ENCODE measurements at regions of chr17 and their contacts with region 1.

Region 1: DNA sequence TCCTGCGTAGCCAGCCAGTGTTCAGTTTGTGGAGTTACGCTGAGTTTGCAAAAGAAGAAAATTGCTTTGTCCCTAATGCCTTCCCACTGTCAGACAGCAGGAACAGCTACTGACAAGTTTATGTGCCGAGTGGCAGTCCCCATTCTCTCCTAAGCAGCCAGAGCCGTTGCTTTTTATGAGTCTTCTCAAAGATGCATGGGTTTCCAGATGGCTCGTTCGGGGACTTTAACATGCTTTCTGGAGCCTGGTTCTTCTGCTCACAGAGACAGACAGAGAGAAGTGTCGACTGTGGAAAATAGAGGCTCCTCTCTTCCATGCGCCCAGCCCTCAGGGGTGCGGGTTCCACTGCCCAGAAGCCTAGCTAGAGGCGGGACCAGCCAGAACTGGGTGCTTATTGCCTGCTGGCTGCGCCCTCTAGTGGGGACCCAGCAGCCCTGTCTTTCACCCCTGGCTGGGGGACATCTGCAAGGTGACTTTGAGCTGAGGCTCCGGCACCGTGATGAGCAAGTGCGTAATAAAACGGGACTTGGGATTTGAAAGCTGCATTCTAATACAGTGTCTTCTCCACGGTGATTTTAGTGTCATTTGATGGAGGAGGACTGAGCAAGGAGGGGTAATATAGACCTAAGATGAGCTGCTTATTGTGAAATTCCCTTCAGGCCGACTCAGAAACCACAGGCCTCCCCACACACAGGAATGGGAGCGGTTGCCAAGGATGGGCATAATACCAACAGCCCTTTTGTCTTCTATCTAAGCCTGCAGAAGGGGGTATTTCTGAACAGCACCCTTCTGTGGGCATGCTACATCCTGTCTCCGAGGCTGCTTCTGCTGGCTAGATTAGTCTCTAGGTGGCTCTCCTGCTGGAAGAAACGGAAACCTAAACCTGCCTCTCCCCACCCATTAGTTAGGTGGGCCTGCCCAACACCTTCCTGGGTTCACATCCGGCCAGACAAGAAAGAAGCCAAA is 73.1 kb downstream of the CCDC182 start:
- DNase-seq: peak; percentile 69
- ATAC-seq: peak; percentile 97
- H3K4me3 ChIP-seq: no peak overlapping the region
- H3K27ac ChIP-seq: no peak overlapping the region
- H3K4me1 ChIP-seq: no peaks in the 10 kb centered on the region
- H3K27me3 ChIP-seq: no peaks in the 10 kb centered on the region
- CTCF ChIP-seq: peak; percentile 97
- EP300 ChIP-seq: no peak
- POLR2A ChIP-seq: no peak
- RAD21 ChIP-seq: peak; percentile 93

Region 2: DNA sequence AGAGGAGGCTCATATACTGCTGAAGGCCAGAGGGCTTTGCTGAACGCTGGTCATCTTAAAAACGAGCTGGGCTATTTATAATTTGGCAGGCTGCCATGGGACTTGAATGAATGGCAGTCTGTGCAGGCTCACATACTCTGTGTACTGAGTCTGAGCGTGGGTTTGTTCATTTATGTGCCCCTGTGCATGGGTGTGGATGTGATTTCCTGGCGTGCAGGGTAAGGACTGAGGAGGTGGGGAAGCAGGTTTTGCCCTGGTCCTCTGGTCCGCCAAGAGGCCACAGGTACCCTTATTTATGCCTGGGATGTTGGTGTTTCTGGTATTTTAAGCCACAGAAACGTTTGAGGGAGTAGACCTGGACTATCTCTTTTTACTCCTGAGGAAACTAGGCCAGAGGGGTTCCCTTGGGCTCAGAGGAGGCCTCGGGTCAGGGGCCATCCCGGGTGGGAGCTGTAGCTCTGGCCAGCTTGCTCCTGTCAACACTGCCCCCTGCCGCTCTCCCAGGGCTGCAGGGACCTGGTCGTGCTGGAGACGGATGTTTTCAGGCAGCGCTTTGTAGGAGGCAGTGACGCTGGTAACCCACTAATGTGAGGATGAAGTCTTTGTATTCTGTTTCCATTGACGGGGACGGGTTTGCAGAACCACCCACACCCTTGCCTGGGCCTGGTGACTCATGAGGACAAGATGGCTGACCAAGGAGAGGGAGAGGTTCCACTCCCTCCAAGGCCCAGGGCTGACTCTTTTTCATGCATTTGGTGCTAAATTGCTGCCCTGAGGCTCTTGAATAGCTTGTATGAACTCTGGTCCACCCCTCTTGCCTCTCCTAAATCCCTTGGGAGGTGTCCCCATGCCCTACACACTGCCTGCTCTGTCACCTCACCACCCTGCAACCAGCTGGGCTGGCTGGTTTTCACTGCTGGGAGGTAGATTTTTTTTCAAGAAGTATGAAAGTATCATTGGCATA is 231.1 kb before region 1 on chr17:
- CTCF ChIA-PET with region 1: no interaction called
- POLR2A ChIA-PET with region 1: no interaction called
- in situ Hi-C with region 1: no loop called
- intact Hi-C with region 1: loop called (anchors 2 kb)
- DNase-seq: peak; percentile 91
- ATAC-seq: peak; percentile 84
- H3K4me3 ChIP-seq: peak overlapping the region in 2 of 3 experiments; percentile 17 to 54; a peak in 3 of 6 replicates
- H3K27ac ChIP-seq: peak overlapping the region; percentile 64
- H3K4me1 ChIP-seq: peaks cover 84% of the 10 kb centered on the region
- H3K27me3 ChIP-seq: no peaks in the 10 kb centered on the region
- CTCF ChIP-seq: peak; percentile 88
- EP300 ChIP-seq: no peak
- POLR2A ChIP-seq: no peak
- RAD21 ChIP-seq: peak; percentile 89

Region 3: DNA sequence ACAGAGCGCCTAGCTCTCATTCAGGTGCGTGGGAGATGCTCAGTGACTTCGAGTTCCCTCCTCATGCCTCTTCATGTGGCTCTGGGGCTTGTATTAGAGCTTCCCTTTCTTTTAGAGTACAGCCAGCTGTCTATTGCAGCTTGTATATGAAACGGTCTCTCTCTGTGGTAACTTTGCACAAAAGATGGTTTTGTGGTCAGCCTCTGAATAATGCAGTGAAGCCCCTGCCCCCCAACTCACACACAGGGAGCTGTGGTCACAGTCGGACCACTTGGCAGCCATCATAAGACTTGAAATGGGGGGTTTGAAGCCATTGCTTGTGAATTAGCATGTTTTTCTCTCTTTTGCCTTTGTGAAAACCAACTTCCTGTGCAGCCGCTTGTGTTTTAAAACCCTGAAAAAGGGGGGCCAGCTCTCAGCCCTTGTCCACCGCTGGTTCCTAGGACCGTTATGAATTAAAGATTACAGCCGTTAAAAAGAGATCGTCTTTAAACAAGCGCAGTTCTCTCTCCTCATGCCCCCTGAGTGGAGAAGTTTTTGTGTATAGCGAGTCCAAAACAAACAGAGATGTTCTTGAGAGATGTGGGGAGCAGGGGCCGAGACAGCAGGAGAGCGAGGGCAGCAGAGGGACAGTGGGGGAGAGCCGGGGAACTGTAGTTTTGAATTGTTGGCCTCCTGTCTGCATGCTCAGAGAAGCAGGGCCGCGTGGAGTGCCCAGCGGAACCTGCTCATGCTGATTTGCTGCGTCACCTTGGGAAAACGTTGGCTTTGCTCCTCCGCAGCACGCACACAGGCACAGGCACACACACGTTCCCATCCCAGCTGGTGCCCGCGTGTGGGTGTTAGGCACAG is 216.7 kb before region 1 on chr17:
- CTCF ChIA-PET with region 1: interaction called, 8 read pairs
- POLR2A ChIA-PET with region 1: interaction called, 3 read pairs
- in situ Hi-C with region 1: no loop called
- intact Hi-C with region 1: loop called (anchors 5 kb)
- DNase-seq: no peak
- ATAC-seq: no peak
- H3K4me3 ChIP-seq: no peak overlapping the region
- H3K27ac ChIP-seq: no peak overlapping the region
- H3K4me1 ChIP-seq: peaks cover 22% of the 10 kb centered on the region
- H3K27me3 ChIP-seq: no peaks in the 10 kb centered on the region
- CTCF ChIP-seq: no peak
- EP300 ChIP-seq: no peak
- POLR2A ChIP-seq: no peak
- RAD21 ChIP-seq: no peak

Region 4: DNA sequence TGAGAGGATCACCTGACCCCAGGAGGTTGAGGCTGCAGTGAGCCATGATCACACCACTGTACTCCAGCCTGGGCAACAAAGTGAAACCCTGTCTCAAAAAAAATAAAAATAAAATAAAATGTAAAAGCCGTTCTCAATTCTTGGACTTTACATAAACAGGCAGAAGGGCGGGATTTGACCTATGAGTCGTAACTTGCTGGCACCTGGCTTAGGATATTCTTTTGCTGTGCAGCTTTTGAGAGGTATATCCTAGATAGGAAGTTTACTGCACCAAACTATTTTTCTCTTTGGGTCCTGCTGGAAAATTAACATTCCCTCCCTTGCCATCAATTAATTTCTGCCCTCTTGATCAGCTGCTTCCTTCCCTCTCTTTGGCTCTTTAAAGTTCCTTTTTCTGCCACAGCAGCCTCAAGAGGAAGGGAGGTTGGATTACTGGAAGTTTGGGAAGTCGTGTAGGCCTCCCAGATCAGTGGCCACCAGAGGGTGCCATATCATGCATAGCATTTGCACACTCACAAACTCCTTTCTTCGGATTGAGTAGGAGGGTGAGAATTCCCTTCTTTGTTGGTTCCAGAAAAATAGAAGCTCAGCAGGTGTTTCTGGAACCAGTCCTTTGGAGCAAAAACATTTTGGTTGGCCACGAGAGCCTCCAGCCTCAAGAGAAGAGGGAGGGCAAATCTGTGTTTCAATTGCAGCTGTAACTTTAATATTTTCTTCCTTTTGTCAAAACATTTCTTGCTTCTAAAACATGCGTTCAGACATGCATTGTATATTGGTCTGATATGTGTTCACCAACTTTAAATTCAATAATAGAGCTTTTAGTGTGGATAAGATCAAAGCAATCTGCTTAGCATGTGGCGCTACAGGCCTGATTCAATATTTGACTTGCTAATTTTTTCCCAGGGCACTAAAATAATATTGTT is 74.2 kb before region 1 on chr17:
- CTCF ChIA-PET with region 1: interaction called, 10 read pairs
- POLR2A ChIA-PET with region 1: no interaction called
- in situ Hi-C with region 1: no loop called
- intact Hi-C with region 1: loop called (anchors 5 kb)
- DNase-seq: peak; percentile 67
- ATAC-seq: peak; percentile 78
- H3K4me3 ChIP-seq: no peak overlapping the region
- H3K27ac ChIP-seq: peak overlapping the region; percentile 33
- H3K4me1 ChIP-seq: peaks cover 13% of the 10 kb centered on the region
- H3K27me3 ChIP-seq: no peaks in the 10 kb centered on the region
- CTCF ChIP-seq: peak; percentile 88
- EP300 ChIP-seq: no peak
- POLR2A ChIP-seq: no peak
- RAD21 ChIP-seq: peak; percentile 76

Region 5: GRCh38 chr17:57747221-57748017 is 75.5 kb after region 1 on chr17:
- CTCF ChIA-PET with region 1: no interaction called
- POLR2A ChIA-PET with region 1: no interaction called
- in situ Hi-C with region 1: no loop called
- intact Hi-C with region 1: loop called (anchors 10 kb)
- DNase-seq: peak; percentile 54
- ATAC-seq: peak; percentile 58
- H3K4me3 ChIP-seq: no peak overlapping the region
- H3K27ac ChIP-seq: no peak overlapping the region
- H3K4me1 ChIP-seq: peaks cover 26% of the 10 kb centered on the region
- H3K27me3 ChIP-seq: peaks cover 0 to 43% of the 10 kb centered on the region in 2 experiments; a peak in 3 of 5 replicates
- CTCF ChIP-seq: peak; percentile 89
- EP300 ChIP-seq: no peak
- POLR2A ChIP-seq: no peak
- RAD21 ChIP-seq: peak; percentile 49; the same call in 1 of the 2 replicates